Activated CD8-positive, alpha-beta T cell treated with anti-CD3 and anti-CD28 coated beads for 36 hours (primary cell): ENCODE measurements at regions of chr6 and their contacts with region 1.

Region 1: GRCh38 chr6:26156076-26156849 is 69.0 kb downstream of the HFE start:
- DNase-seq: peak; percentile 87
- ATAC-seq: peak; percentile 41
- H3K4me3 Mint-ChIP-seq: peak overlapping the region; percentile 88
- H3K27ac Mint-ChIP-seq: peak overlapping the region; percentile 93
- H3K4me1 Mint-ChIP-seq: peaks cover 36% of the 10 kb centered on the region
- H3K27me3 Mint-ChIP-seq: peaks cover 14% of the 10 kb centered on the region
- CTCF ChIP-seq: no peak

Region 2: GRCh38 chr6:26054857-26055669 is 101.2 kb before region 1 on chr6:
- CTCF ChIA-PET with region 1: no interaction called
- POLR2A ChIA-PET with region 1: interaction called, 107 read pairs
- intact Hi-C with region 1: no loop called
- DNase-seq: peak; percentile 94
- ATAC-seq: peak; percentile 73
- H3K4me3 Mint-ChIP-seq: peak overlapping the region; percentile 92
- H3K27ac Mint-ChIP-seq: peak overlapping the region; percentile 99
- H3K4me1 Mint-ChIP-seq: peaks cover 17% of the 10 kb centered on the region
- H3K27me3 Mint-ChIP-seq: peaks cover 3% of the 10 kb centered on the region
- CTCF ChIP-seq: no peak

Region 3: GRCh38 chr6:26141378-26141904 is 14.8 kb before region 1 on chr6:
- CTCF ChIA-PET with region 1: interaction called, 3 read pairs
- POLR2A ChIA-PET with region 1: interaction called, 1,225 read pairs
- intact Hi-C with region 1: no loop called
- DNase-seq: no peak
- ATAC-seq: no peak
- H3K4me3 Mint-ChIP-seq: no peak overlapping the region
- H3K27ac Mint-ChIP-seq: no peak overlapping the region
- H3K4me1 Mint-ChIP-seq: no peaks in the 10 kb centered on the region
- H3K27me3 Mint-ChIP-seq: no peaks in the 10 kb centered on the region
- CTCF ChIP-seq: no peak

Region 4: GRCh38 chr6:26204332-26205165 is 48.3 kb after region 1 on chr6:
- CTCF ChIA-PET with region 1: interaction called, 3 read pairs
- POLR2A ChIA-PET with region 1: interaction called, 826 read pairs
- intact Hi-C with region 1: loop called (anchors 5 kb)
- DNase-seq: peak; percentile 91
- ATAC-seq: peak; percentile 75
- H3K4me3 Mint-ChIP-seq: no peak overlapping the region
- H3K27ac Mint-ChIP-seq: no peak overlapping the region
- H3K4me1 Mint-ChIP-seq: peaks cover 17% of the 10 kb centered on the region
- H3K27me3 Mint-ChIP-seq: no peaks in the 10 kb centered on the region
- CTCF ChIP-seq: no peak

Region 5: DNA sequence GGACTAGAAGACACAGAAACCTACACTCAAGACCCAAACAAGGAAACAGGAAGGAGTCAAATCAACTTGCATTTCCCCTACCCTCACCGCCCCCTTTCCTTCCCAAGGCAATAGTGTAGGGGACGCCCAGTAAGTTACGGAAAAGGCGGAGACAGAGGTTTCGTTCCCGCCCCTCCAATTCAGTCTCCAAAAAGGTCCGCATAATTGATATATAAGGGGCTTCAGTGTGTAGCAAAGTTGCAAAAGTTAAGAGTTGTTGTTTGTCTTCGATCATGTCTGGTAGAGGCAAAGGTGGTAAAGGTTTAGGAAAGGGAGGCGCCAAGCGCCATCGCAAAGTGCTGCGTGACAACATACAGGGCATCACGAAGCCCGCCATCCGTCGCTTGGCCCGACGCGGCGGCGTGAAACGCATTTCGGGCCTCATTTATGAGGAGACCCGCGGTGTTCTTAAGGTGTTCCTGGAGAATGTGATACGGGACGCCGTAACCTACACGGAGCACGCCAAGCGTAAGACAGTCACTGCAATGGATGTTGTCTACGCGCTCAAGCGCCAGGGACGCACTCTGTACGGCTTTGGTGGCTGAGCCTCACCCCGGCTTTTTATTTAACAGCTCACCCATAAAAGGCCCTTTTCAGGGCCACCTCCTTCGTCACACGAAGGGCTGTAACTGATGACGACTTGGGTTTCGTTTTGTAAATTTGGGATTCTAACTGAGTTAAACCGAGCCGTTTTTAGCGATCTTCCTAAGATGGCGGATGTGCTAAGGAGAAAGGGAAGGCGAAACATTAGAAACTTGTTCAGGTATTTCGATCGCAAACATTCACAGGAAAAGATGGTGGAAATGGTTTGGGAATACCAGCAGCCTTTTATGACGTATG is 84.1 kb after region 1 on chr6:
- CTCF ChIA-PET with region 1: no interaction called
- POLR2A ChIA-PET with region 1: interaction called, 138 read pairs
- intact Hi-C with region 1: no loop called
- DNase-seq: peak; percentile 88
- ATAC-seq: peak; percentile 82
- H3K4me3 Mint-ChIP-seq: peak overlapping the region; percentile 77
- H3K27ac Mint-ChIP-seq: peak overlapping the region; percentile 92
- H3K4me1 Mint-ChIP-seq: peaks cover 32% of the 10 kb centered on the region
- H3K27me3 Mint-ChIP-seq: no peaks in the 10 kb centered on the region
- CTCF ChIP-seq: no peak

Region 6: DNA sequence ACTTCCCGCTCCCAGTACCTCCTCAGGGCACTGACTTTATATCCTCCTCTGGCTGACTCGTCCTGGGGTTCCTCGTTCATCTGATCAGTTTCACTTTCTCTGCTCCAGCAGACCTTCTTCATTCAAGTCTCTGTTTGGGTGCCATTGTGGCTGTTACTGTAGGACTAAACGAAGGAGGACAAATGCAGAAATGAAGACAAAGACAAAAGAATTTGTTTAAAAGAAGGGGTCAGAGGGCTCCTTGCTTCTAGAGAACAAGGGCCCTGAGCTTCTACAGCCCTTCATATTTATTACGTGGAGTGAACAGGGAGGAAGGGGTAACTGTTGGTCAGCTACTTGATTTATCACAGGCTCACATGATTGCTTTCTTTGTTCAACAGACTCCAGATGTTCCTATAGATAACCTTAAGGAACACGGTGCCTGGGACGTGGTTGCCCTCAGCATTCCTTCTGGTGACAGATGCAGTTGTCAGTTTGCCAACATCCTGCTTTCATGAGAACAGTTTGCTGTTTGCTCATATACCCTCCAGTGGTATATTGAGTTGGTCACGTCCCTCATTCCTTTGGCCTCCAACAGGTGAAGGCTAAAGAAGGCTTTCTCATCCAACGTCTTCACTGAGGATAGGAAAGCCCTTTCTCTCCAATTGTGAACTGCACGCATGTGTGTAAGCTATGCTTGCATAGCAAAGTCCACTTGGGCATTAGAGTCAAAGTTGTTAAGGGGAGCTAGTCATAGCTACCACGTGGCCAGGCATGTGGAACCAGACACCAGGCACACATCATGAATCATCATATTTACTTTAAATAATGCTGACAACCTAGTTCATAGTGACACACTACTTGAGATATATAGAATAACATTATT is 139.7 kb after region 1 on chr6:
- CTCF ChIA-PET with region 1: no interaction called
- POLR2A ChIA-PET with region 1: no interaction called
- intact Hi-C with region 1: no loop called
- DNase-seq: no peak
- ATAC-seq: no peak
- H3K4me3 Mint-ChIP-seq: peak overlapping the region; percentile 6
- H3K27ac Mint-ChIP-seq: no peak overlapping the region
- H3K4me1 Mint-ChIP-seq: peaks cover 25% of the 10 kb centered on the region
- H3K27me3 Mint-ChIP-seq: peaks cover 2% of the 10 kb centered on the region
- CTCF ChIP-seq: no peak